Aorta (tissue), 5 donors: ENCODE measurements at regions of chr3 and their contacts with region 1.

Region 1: GRCh38 chr3:38039101-38039898 is at the start of gene DLEC1:
- DNase-seq: peak; percentile 88 to 89
- ATAC-seq: peak; percentile 85
- H3K4me3 ChIP-seq: peak within 1 kb of the TSS; percentile 8 to 19
- H3K27ac ChIP-seq: no peak within 1 kb of the TSS
- H3K4me1 ChIP-seq: no peaks in the 10 kb centered on the region
- H3K27me3 ChIP-seq: no peaks in the 10 kb centered on the region
- total RNA-seq, gene DLEC1: 0.26 to 0.69 TPM

Region 2: DNA sequence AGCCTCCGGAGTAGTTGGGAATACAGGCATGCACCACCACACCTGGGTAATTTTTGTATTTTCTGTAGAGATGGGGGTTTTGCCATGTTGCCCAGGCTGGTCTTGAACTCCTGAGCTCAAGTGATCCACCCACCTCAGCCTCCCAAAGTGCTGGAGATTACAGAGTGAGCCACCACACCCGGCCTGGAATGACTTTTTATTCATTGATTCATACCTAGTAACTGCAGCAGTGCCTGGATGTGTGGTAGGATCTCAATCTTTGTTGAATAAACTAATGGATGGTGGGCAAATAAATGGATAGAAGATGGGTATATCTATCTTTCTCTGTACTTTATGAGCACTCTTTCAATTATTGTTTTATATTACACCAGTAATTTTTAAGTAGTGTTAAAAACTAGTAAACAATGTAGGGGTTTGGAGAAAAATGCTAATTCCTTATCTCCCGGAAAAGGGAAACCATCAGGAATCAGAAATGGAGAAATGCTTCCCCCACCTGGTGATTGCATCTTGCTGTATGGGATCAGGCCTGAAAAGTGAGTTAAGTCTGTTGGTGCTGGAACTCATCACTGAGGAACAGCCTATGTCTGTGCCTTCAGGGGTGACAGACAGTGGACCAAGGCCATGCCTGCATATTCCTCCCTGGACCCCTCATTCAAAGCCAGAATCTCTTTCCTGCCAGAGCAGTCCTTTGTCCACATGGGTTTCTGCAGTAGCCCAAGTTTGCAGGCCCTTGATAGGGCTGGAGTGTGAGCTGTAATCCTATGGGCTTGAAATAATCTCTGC is 338.6 kb before region 1 on chr3:
- intact Hi-C with region 1: no loop called
- DNase-seq: no peak
- ATAC-seq: peak; percentile 31
- H3K4me3 ChIP-seq: no peak overlapping the region
- H3K27ac ChIP-seq: no peak overlapping the region
- H3K4me1 ChIP-seq: no peaks in the 10 kb centered on the region
- H3K27me3 ChIP-seq: no peaks in the 10 kb centered on the region

Region 3: GRCh38 chr3:38119821-38120691 is 80.8 kb after region 1 on chr3:
- intact Hi-C with region 1: loop called in 1 of 2 experiments (anchors 5 kb)
- DNase-seq: no peak
- ATAC-seq: no peak
- H3K4me3 ChIP-seq: no peak overlapping the region
- H3K27ac ChIP-seq: no peak overlapping the region
- H3K4me1 ChIP-seq: no peaks in the 10 kb centered on the region
- H3K27me3 ChIP-seq: no peaks in the 10 kb centered on the region

Region 4: DNA sequence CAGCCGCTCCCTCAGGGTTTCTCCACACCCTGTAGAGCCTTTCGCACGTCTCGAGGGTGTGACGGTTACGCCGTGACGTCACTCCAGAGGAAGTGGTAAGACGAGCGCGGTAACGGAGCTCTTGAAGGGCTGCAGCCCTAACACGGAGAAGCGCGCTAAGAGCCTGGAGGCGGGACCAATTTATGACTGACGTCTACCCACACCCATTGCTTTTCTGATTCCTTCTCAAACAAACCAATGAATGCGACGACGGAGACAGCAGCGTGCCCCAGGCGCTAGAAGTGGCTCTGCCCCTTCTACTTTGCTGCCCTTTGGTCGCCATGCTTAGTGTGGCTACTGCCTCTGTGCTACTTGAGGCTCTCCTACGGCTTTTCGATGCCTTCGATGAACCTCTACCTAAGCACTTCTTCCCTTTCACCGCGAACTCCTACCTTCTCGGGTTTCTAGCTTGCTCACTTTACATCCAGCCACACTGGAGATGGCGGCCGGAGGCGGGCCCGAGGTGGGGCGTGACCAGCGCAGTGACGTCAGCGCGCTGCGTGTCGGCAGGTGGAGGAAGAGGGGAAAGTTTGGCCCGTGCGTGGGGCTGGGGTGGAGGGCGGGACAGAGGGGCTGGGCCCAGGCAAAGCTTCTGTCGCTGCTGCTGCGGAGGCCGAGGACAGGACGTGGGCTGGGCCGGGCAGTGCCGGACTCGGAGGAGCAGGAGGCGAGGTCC is 125.8 kb after region 1 on chr3 and contains the start of gene OXSR1:
- intact Hi-C with region 1: loop called in 1 of 2 experiments (anchors 10 kb)
- DNase-seq: peak; percentile 99
- ATAC-seq: peak; percentile 98
- H3K4me3 ChIP-seq: peak within 1 kb of the TSS; percentile 75 to 79
- H3K27ac ChIP-seq: peak within 1 kb of the TSS; percentile 4 to 54
- H3K4me1 ChIP-seq: peaks cover 2% of the 10 kb centered on the region in 2 donors
- H3K27me3 ChIP-seq: no peaks in the 10 kb centered on the region
- total RNA-seq, gene OXSR1: 38.9 to 42.0 TPM